ENCODE measurements at regions of chr3 and their contacts with region 1.

Region 1: DNA sequence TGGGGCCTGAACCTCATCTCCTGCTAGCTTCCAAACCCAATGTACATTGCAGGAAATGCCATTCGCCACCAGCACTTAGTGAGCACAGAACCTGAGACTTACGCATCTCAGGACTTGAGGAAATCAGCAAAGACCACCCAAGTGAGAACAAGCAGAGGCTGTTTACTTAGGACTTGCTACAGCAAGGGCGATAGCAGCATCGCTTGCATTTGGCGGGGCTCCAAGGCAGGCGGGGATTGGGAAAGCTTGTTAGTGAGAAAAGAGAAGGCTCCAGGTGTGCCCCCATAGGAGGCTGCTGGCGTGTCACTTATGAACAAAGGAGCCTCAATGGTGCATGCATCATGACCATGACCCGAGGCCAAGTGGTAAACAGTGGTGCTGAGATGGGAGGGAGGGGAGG is 19.7 kb downstream of the SLC6A20 start:
- DNase-seq: no peak
- H3K4me3 ChIP-seq: no peak overlapping the region
- H3K27ac ChIP-seq: no peak overlapping the region
- H3K4me1 ChIP-seq: no peaks in the 10 kb centered on the region
- H3K27me3 ChIP-seq: peaks cover 0 to 3% (median 0%) of the 10 kb centered on the region in 5 experiments

Region 2: DNA sequence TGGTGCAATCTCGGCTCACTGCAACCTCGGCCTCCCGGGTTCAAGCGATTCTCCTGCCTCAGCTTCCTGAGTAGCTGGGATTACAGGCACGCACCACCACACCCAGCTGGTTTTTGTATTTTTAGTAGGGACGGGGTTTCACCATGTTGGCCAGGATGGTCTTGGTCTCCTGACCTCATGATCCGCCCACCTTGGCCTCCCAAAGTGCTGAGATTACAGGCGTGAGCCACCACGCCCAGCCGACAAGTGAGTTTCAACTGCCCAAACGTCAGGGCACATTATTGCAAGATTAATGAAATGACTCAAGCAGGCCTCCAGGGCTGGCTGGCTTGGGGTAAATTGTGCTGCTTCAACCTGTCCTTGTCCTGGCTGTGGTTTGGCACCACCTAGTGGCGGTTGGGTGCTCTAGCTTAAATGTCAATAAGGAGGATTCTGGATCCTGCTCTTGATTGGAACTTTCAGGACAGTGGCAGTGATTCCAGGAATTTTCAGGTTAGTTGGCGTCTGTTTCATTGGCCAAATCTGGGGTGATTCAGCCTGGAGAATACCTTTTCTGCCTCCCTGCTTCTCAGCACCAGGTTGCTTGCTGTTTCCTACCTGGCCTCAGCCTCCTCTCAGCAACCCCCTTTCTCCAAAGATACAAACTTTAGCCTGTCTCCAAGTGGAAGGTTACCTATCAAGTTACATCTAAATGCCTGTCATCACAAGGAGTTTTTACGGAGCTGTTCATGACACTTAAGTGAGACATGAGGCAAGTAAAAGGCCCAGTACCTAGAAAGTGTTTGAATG is 119.8 kb before region 1 on chr3:
- CTCF ChIA-PET with region 1: no interaction called
- POLR2A ChIA-PET with region 1: no interaction called
- DNase-seq: peak; percentile 93 to 98 (median 97)
- H3K4me3 ChIP-seq: no peak overlapping the region
- H3K27ac ChIP-seq: no peak overlapping the region
- H3K4me1 ChIP-seq: peaks cover 3 to 36% (median 24%) of the 10 kb centered on the region in 4 experiments
- H3K27me3 ChIP-seq: no peaks in the 10 kb centered on the region

Region 3: DNA sequence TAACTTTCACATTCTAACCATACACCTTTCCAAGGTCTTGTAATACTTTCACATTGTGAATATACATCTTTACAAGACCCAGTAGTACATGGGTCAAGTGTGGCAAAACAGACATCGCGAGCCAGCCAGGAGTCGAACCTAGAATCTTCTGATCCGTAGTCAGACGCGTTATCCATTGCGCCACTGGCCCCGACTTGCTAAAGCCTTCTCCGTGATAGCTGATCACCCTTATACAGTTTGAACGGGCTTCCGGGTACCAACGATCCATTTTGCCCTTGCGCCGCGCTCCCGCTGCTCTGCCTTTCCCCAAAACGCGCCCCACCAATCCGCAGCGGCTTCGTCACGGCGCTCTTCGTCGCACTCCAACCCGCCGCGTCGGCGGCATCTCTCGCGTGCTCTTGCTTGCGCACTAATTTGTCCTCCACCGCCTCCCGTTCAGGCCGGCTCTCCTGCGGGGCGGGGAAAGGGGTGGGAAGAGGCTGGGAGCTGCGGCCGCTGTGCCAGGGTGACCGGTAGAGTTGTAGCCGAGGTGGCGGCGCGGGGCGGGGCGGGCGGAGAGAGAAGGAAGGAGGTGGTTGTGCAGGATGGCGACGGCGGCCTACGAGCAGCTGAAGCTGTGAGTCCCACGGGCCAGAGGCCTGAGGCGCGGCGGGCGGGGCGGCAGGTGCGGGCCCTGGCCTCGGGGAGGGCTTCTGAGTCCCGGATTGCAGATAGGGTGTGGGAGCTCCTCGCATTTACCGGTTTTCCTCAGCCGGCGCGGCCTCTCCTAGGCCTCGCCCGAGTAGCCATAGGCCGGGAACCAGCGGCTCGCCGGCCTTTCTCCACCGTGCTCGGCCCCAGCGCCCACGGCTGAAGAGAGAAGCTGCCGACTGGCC is 87.5 kb before region 1 on chr3 and contains the start of gene SACM1L:
- CTCF ChIA-PET with region 1: no interaction called
- POLR2A ChIA-PET with region 1: no interaction called
- DNase-seq: peak; percentile 99 to 100 (median 99)
- H3K4me3 ChIP-seq: peak within 1 kb of the TSS; percentile 85 to 96 (median 91)
- H3K27ac ChIP-seq: peak within 1 kb of the TSS; percentile 85 to 96
- H3K4me1 ChIP-seq: peaks cover 33 to 48% (median 43%) of the 10 kb centered on the region in 4 experiments
- H3K27me3 ChIP-seq: no peaks in the 10 kb centered on the region

Region 4: GRCh38 chr3:45760878-45761711 is 15.5 kb before region 1 on chr3:
- CTCF ChIA-PET with region 1: interaction called, 28 read pairs
- POLR2A ChIA-PET with region 1: no interaction called
- DNase-seq: peak; percentile 47 to 69 (median 65)
- H3K4me3 ChIP-seq: no peak overlapping the region
- H3K27ac ChIP-seq: no peak overlapping the region
- H3K4me1 ChIP-seq: no peaks in the 10 kb centered on the region
- H3K27me3 ChIP-seq: peaks cover 0 to 3% (median 0%) of the 10 kb centered on the region in 5 experiments

Region 5: GRCh38 chr3:45786801-45787495 is 10.3 kb after region 1 on chr3:
- CTCF ChIA-PET with region 1: no interaction called
- POLR2A ChIA-PET with region 1: no interaction called
- DNase-seq: no peak
- H3K4me3 ChIP-seq: no peak overlapping the region
- H3K27ac ChIP-seq: no peak overlapping the region
- H3K4me1 ChIP-seq: no peaks in the 10 kb centered on the region
- H3K27me3 ChIP-seq: peaks cover 0 to 7% (median 0%) of the 10 kb centered on the region in 5 experiments

Region 6: GRCh38 chr3:45844616-45845015 is 68.0 kb after region 1 on chr3:
- CTCF ChIA-PET with region 1: no interaction called
- POLR2A ChIA-PET with region 1: no interaction called
- DNase-seq: no peak
- H3K4me3 ChIP-seq: no peak overlapping the region
- H3K27ac ChIP-seq: no peak overlapping the region
- H3K4me1 ChIP-seq: peaks cover 6 to 15% (median 15%) of the 10 kb centered on the region in 4 experiments
- H3K27me3 ChIP-seq: peaks cover 0 to 5% (median 0%) of the 10 kb centered on the region in 5 experiments